ENCODE measurements at regions of chr15 and their contacts with region 1.

Region 1: GRCh38 chr15:99076552-99077308 is 28.1 kb upstream of the SYNM start:
- DNase-seq: peak in 1 of 2 donors; percentile 61
- ATAC-seq: peak; percentile 85 to 95 (median 87)
- H3K4me3 ChIP-seq: peak overlapping the region; percentile 45
- H3K27ac ChIP-seq: no peak overlapping the region
- H3K4me1 ChIP-seq: no peaks in the 10 kb centered on the region
- H3K27me3 ChIP-seq: no peaks in the 10 kb centered on the region
- CTCF ChIP-seq: peak; percentile 89

Region 2: GRCh38 chr15:98442379-98442833 is 634.3 kb before region 1 on chr15:
- intact Hi-C with region 1: loop called (anchors 5 to 10 kb)
- DNase-seq: no peak
- ATAC-seq: peak in 3 of 4 donors; percentile 53 to 64 (median 54)
- H3K4me3 ChIP-seq: no peak overlapping the region
- H3K27ac ChIP-seq: no peak overlapping the region
- H3K4me1 ChIP-seq: no peaks in the 10 kb centered on the region
- H3K27me3 ChIP-seq: peaks cover 0 to 7% (median 4%) of the 10 kb centered on the region in 3 donors
- CTCF ChIP-seq: peak; percentile 60

Region 3: GRCh38 chr15:98518823-98519561 is 557.7 kb before region 1 on chr15:
- intact Hi-C with region 1: loop called (anchors 5 kb)
- DNase-seq: no peak
- ATAC-seq: peak; percentile 71 to 94 (median 86)
- H3K4me3 ChIP-seq: no peak overlapping the region
- H3K27ac ChIP-seq: no peak overlapping the region
- H3K4me1 ChIP-seq: peaks cover 3% of the 10 kb centered on the region
- H3K27me3 ChIP-seq: no peaks in the 10 kb centered on the region
- CTCF ChIP-seq: peak; percentile 87

Region 4: GRCh38 chr15:98713585-98714001 is 363.1 kb before region 1 on chr15:
- intact Hi-C with region 1: no loop called
- DNase-seq: no peak
- ATAC-seq: no peak
- H3K4me3 ChIP-seq: no peak overlapping the region
- H3K27ac ChIP-seq: no peak overlapping the region
- H3K4me1 ChIP-seq: peaks cover 51% of the 10 kb centered on the region
- H3K27me3 ChIP-seq: no peaks in the 10 kb centered on the region
- CTCF ChIP-seq: no peak

Region 5: DNA sequence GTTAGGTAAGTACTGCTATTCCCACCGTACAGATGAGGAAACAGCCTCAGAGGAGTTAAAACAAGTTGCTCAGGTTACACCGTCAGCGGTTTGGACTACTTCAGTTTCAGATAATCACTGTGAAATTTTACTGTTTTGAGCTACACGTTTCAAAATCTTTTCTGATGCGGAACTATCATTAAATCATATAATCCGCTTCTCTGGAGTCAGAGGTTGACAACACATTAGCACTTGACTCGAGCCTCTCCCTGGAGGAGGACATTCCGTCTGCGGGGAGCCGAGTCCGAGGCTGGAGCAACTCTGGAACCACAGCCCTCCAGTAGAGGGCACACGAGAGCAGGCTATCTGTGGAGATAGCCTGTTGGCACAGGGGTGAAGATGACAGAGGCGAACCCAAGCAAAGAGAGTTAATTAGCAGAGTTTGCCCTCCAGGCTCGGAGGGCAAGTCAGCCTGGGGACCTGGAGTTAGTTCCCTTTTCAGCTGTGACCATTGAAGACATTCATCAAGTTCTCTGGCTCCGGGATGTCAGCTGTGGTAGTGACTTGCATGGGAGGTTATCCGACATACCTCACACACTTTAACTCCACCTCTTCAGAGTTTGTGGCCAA is 297.2 kb before region 1 on chr15:
- intact Hi-C with region 1: loop called (anchors 5 kb)
- DNase-seq: peak; percentile 79 to 90
- ATAC-seq: peak; percentile 93 to 98 (median 96)
- H3K4me3 ChIP-seq: peak overlapping the region; percentile 6
- H3K27ac ChIP-seq: no peak overlapping the region
- H3K4me1 ChIP-seq: peaks cover 27% of the 10 kb centered on the region
- H3K27me3 ChIP-seq: no peaks in the 10 kb centered on the region
- CTCF ChIP-seq: peak; percentile 96

Region 6: GRCh38 chr15:99006103-99006502 is 70.6 kb before region 1 on chr15:
- intact Hi-C with region 1: no loop called
- DNase-seq: no peak
- ATAC-seq: peak in 3 of 4 donors; percentile 47 to 53 (median 49)
- H3K4me3 ChIP-seq: peak overlapping the region; percentile 61
- H3K27ac ChIP-seq: peak overlapping the region; percentile 86
- H3K4me1 ChIP-seq: peaks cover 3% of the 10 kb centered on the region
- H3K27me3 ChIP-seq: no peaks in the 10 kb centered on the region
- CTCF ChIP-seq: no peak

Measured in psoas muscle (tissue), 8 donors.